AG04449 (cell line): ENCODE measurements at regions of chr12 and their contacts with region 1.

Region 1: DNA sequence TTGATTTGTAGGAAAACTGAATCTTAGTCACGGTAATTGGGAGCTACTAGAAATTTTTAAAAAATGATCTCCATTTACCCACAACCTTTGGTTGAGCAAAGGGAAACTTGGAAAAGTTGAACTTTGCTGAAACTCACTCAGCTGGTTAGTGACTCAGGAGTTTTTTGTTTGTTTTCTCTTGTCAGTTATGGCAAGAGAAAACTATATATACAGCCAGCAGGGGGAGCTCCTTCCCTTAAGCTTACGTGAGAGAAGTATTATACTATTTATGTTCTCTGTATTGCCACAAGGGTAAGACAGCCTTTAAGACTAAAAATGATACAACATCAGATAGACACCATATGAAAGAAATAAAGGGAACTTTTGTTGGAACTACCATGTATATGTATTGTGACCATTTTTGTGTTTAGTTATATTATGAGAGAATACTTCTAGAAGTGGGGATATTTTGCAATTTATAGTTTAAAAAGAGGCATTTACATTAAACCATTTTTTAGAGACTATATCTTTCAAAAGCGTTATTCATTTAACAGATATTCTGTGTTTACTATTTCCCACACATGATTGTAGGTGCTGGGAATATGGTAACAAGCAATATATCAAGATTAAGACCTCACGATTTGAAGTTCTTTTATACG is 28.1 kb upstream of the TBC1D30 start:
- DNase-seq: peak; percentile 61
- H3K4me3 ChIP-seq: no peak overlapping the region
- CTCF ChIP-seq: peak; percentile 59

Region 2: GRCh38 chr12:64780531-64781279 is 15.6 kb before region 1 on chr12:
- CTCF ChIA-PET with region 1: interaction called, 40 read pairs
- POLR2A ChIA-PET with region 1: no interaction called
- DNase-seq: no peak
- H3K4me3 ChIP-seq: peak overlapping the region; percentile 32
- CTCF ChIP-seq: no peak

Region 3: DNA sequence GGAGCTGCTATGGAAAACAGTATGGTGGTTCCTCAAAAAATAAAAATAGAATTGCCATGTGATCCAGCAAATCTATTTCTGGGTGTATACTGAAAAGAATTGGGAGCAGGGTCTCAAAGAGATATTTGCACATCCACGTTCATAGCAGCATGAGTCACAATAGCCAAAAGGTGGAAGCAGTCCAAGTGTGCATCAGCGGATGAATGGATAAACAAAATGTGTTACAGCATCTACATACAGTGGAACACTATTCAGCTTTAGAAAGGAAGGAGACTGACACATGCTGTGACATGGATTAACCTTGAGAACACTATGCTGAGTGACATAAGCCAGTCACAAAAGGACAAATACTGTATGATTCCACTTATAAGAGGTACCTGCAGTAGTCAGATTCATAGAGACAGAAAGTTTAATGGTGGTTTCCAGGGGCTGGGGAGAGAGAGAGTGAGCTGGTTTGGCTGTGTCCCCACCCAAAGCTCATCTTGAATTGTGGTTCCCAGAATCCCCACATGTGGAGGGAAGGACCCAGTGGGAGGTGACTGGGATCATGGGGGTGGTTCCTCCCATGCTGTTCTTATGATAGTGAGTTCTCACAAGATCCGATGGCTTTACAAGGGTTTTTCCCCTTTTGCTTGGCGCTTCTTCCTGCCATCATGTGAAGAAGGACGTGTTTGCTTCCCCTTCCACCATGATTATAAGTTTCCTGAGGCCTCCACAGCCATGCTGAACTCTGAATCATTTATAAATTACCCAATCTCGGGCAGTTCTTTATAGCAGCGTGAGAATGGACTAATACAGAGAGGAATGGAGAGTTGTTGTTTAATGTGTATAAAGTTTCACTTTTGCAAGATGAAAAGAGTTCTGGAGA is 10.5 kb after region 1 on chr12:
- CTCF ChIA-PET with region 1: interaction called, 46 read pairs
- POLR2A ChIA-PET with region 1: no interaction called
- DNase-seq: no peak
- H3K4me3 ChIP-seq: no peak overlapping the region
- CTCF ChIP-seq: no peak

Region 4: GRCh38 chr12:65106948-65107347 is 310.6 kb after region 1 on chr12:
- CTCF ChIA-PET with region 1: interaction called, 16 read pairs
- POLR2A ChIA-PET with region 1: no interaction called
- DNase-seq: no peak
- H3K4me3 ChIP-seq: no peak overlapping the region
- CTCF ChIP-seq: peak; percentile 12

Region 5: GRCh38 chr12:65556681-65557437 is 760.5 kb after region 1 on chr12:
- CTCF ChIA-PET with region 1: no interaction called
- POLR2A ChIA-PET with region 1: no interaction called
- DNase-seq: no peak
- H3K4me3 ChIP-seq: no peak overlapping the region
- CTCF ChIP-seq: peak; percentile 93